Natural killer cell (primary cell): ENCODE measurements at regions of chr19 and their contacts with region 1.

Region 1: DNA sequence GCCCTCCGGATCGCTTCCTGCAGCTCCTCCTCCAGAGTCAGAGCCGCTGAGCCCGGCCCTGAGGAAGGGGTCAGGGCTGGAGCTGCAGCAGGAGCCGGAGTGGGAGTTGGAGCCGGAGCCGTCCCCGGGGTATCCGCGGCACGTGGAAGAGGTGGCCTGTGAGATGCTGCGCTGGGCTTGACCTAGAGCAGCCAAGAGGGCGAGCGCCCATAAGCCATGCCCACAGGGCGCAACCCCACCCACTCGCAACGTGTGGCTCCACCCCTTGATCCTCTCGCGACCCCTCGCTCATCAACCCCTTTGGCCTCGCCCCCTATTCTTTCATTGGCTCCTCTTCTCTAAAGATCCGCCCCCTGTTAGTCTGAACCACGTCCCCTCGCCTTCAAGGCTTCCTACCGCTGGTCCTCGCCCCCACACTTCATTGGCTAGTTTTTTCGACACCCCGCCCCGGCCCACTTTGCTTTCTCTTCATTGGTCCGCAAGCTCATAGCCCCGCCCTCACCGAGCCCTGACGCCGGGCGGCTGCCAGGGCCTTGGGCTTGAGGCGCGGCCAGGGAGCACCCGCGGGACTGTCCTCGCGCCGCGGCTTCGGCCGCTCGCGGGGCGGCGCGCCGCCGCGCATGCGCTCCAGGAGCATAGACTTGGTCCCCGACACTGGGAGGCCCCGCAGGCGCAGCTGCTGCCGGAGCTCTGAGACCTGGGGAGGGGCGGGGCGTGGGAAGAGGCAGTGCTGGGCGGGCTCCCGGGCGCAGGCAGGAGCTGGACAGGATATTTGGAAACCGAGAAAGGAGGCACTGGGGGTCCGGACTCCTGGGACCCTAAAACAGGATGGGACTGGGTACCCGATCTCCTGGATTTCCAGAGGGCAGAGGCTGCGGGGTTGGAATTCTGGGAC is 5.4 kb downstream of the MAMSTR start:
- DNase-seq: peak; percentile 97 to 98
- ATAC-seq: peak; percentile 90 to 96 (median 91)
- H3K4me3 ChIP-seq: peak overlapping the region; percentile 78
- H3K4me3 Mint-ChIP-seq: peak overlapping the region; percentile 83
- H3K27ac ChIP-seq: peak overlapping the region; percentile 91
- H3K27ac Mint-ChIP-seq: peak overlapping the region; percentile 58 to 68
- H3K4me1 ChIP-seq: peaks cover 21% of the 10 kb centered on the region
- H3K4me1 Mint-ChIP-seq: peaks cover 0 to 25% of the 10 kb centered on the region in 2 donors
- H3K27me3 ChIP-seq: no peaks in the 10 kb centered on the region
- H3K27me3 Mint-ChIP-seq: no peaks in the 10 kb centered on the region
- CTCF ChIP-seq: no peak

Region 2: DNA sequence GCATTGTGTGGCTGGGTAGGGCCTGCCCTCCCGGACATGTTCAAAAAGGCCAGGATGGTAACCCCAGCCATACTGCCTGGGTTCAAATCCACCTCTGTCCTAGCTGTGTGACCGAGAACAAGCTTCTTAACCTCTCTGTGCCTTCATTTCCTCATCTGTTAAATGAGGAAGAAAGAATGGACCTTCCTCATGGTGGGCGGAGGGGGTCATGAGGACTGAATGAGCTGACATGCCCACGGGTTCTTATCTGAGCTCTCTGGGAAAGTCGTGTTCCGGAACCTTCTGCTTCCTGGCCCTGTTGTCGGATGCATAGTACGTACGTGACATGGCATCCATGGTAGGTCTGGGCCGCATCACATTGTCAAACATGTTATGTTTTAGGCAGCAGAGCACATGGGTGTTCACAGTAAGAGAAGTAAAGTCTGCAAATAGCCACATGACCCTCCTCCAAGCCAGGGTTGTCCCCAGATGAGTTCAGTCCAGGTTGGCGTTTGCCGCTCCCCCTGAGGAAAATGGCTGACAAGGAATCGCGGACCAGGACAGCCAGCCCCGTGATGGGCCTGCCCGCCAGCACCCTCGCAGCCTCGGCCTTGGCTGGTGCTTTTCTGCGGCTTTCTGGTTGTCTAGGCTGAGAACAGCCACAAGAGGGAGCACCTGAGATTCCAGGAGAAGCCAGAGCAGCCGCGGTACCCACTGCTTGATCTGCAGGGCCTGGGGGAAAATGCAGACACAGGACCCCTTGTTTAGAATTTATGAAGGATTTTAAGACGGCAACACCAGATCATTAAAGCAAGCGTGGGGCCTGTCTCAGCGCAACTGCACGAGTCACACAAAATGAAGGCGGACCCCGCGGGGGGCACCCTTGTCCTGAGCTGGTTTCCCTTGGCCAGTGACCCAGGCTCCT is 38.9 kb before region 1 on chr19:
- intact Hi-C with region 1: no loop called
- DNase-seq: peak; percentile 59 to 91
- ATAC-seq: peak; percentile 74 to 98 (median 98)
- H3K4me3 ChIP-seq: no peak overlapping the region
- H3K4me3 Mint-ChIP-seq: no peak overlapping the region
- H3K27ac ChIP-seq: no peak overlapping the region
- H3K27ac Mint-ChIP-seq: peak overlapping the region in 1 of 2 donors; percentile 52
- H3K4me1 ChIP-seq: peaks cover 8% of the 10 kb centered on the region
- H3K4me1 Mint-ChIP-seq: peaks cover 7 to 8% of the 10 kb centered on the region in 2 donors
- H3K27me3 ChIP-seq: no peaks in the 10 kb centered on the region
- H3K27me3 Mint-ChIP-seq: peaks cover 0 to 3% of the 10 kb centered on the region in 2 donors
- CTCF ChIP-seq: peak; percentile 74

Region 3: GRCh38 chr19:48738557-48739399 is 24.7 kb after region 1 on chr19:
- intact Hi-C with region 1: loop called (anchors 1 kb)
- DNase-seq: peak; percentile 71 to 93
- ATAC-seq: peak; percentile 87 to 91 (median 88)
- H3K4me3 ChIP-seq: no peak overlapping the region
- H3K4me3 Mint-ChIP-seq: peak overlapping the region; percentile 56
- H3K27ac ChIP-seq: peak overlapping the region; percentile 45
- H3K27ac Mint-ChIP-seq: peak overlapping the region in 1 of 2 donors; percentile 49
- H3K4me1 ChIP-seq: peaks cover 25% of the 10 kb centered on the region
- H3K4me1 Mint-ChIP-seq: peaks cover 8 to 24% of the 10 kb centered on the region in 2 donors
- H3K27me3 ChIP-seq: peaks cover 9% of the 10 kb centered on the region
- H3K27me3 Mint-ChIP-seq: no peaks in the 10 kb centered on the region
- CTCF ChIP-seq: no peak

Region 4: DNA sequence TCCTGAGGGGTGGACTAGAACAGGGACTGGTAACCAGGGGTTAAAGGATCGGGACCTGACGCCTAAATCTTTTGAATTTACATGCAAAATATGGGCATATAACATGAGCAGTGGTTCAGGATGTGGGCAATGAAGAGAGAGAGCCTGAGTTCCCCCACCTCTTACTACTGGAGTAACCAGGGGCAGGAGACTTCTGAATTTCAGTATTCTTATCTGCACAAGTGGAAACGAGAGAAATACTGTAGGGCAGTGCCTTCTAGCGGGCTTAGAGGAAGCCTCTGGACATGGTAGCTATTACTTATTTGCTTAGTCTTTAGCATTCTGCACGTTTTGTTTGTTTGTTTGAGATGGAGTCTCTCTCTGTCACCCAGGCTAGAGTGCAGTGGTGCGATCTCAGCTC is 70.4 kb after region 1 on chr19:
- intact Hi-C with region 1: no loop called
- DNase-seq: no peak
- ATAC-seq: no peak
- H3K4me3 ChIP-seq: no peak overlapping the region
- H3K4me3 Mint-ChIP-seq: no peak overlapping the region
- H3K27ac ChIP-seq: no peak overlapping the region
- H3K27ac Mint-ChIP-seq: no peak overlapping the region
- H3K4me1 ChIP-seq: peaks cover 8% of the 10 kb centered on the region
- H3K4me1 Mint-ChIP-seq: peaks cover 5% of the 10 kb centered on the region in 2 donors
- H3K27me3 ChIP-seq: no peaks in the 10 kb centered on the region
- H3K27me3 Mint-ChIP-seq: peaks cover 0 to 2% of the 10 kb centered on the region in 2 donors
- CTCF ChIP-seq: no peak